ENCODE measurements at regions of chr1 and their contacts with region 1.

Region 1: GRCh38 chr1:174217787-174218574 is 58.7 kb downstream of the RABGAP1L start:
- DNase-seq: no peak
- H3K4me3 Mint-ChIP-seq: no peak overlapping the region
- H3K27ac Mint-ChIP-seq: no peak overlapping the region
- H3K4me1 Mint-ChIP-seq: peaks cover 2% of the 10 kb centered on the region
- H3K27me3 Mint-ChIP-seq: no peaks in the 10 kb centered on the region

Region 2: DNA sequence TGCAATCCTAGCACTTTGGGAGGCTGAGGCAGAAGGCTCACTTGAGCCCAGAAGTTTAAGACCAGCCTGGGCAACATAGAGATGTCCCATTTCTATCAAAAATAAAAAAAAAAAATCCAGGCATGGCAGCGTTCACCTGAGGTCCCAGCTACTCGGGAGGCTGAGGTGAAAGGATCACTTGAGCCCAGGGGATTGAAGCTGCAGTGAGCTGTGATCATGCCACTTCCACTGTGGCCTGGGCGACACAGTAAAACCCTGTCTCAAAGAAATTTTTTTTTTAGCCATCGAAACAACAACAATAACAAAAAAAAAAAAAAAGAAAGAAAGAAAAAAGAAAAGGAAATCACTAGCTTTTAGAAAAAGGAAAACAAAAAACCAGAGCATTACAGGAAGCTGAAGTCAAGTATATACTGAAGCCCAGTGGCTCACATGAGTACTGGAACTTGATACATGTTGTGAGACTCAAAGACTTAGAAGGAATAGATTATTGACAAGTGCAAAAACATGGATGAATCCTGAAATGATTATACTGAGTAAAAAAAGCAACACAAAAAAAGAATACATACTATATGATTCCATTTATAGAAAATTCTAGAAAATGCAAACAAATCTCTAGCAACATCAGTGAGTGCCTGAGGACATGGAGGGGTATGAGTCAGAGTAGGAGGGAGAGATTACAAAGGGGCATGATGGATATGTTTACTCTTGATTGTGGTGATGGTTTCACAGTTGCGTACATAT is 64.7 kb before region 1 on chr1:
- CTCF ChIA-PET with region 1: interaction called, 16 read pairs
- POLR2A ChIA-PET with region 1: no interaction called
- DNase-seq: no peak
- H3K4me3 Mint-ChIP-seq: no peak overlapping the region
- H3K27ac Mint-ChIP-seq: peak overlapping the region; percentile 69
- H3K4me1 Mint-ChIP-seq: peaks cover 59% of the 10 kb centered on the region
- H3K27me3 Mint-ChIP-seq: no peaks in the 10 kb centered on the region

Region 3: GRCh38 chr1:174204697-174205308 is 13.2 kb before region 1 on chr1:
- CTCF ChIA-PET with region 1: interaction called, 17 read pairs
- POLR2A ChIA-PET with region 1: interaction called, 5 read pairs
- DNase-seq: no peak
- H3K4me3 Mint-ChIP-seq: peak overlapping the region; percentile 36
- H3K27ac Mint-ChIP-seq: peak overlapping the region; percentile 76
- H3K4me1 Mint-ChIP-seq: peaks cover 44% of the 10 kb centered on the region
- H3K27me3 Mint-ChIP-seq: no peaks in the 10 kb centered on the region

Region 4: GRCh38 chr1:174269989-174270651 is 52.1 kb after region 1 on chr1:
- CTCF ChIA-PET with region 1: no interaction called
- POLR2A ChIA-PET with region 1: no interaction called
- DNase-seq: no peak
- H3K4me3 Mint-ChIP-seq: no peak overlapping the region
- H3K27ac Mint-ChIP-seq: no peak overlapping the region
- H3K4me1 Mint-ChIP-seq: no peaks in the 10 kb centered on the region
- H3K27me3 Mint-ChIP-seq: no peaks in the 10 kb centered on the region

Measured in activated CD4-positive, alpha-beta memory T cell treated with anti-CD3 and anti-CD28 coated beads, Interleukin-2, amount 10 ng/mL, durations not matched to agents 7 days and 5 days (primary cell).